Activated T-helper 2 cell treated with anti-CD3 and anti-CD28 coated beads, Interferon-gamma antibody, Interleukin-2, Interleukin-4, amounts not matched to agents 10 μg/mL and 5 μg/mL and 100 μg/mL, durations not matched to agents 14 hours and 24 hours and 36 hours (primary cell): ENCODE measurements at regions of chr1 and their contacts with region 1.

Region 1: DNA sequence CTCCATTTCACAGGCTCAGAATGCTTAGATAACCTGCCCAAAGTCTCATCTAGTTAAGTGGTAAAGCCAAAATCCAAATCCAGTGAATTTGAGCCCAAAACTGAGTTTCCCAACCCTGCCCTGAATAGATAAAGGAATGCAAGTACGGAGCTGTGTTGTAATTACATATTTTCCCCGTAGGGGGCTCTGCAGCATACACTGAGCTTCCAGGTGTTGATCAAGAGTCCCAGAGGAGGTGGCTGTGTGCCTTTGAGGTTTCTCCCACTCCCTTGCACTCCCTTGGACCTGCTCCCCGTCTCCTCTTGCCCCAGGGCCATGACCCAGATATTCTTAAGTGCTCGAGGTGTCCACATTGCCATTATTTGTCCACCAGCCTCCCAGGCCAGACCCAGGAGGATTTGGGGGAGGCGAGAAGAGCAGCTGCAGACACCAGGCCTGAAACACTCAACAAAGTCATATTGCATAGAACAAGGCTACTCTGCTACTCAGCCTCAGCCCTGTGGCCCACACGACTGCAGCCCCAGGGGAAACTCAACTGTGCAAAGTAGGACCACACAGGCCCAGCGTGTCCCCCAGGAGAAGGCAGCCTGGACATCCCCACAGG is 18.4 kb upstream of the LY9 start:
- DNase-seq: peak; percentile 38
- H3K4me3 Mint-ChIP-seq: no peak overlapping the region
- H3K27ac Mint-ChIP-seq: no peak overlapping the region
- H3K4me1 Mint-ChIP-seq: peaks cover 48% of the 10 kb centered on the region
- H3K27me3 Mint-ChIP-seq: no peaks in the 10 kb centered on the region

Region 2: DNA sequence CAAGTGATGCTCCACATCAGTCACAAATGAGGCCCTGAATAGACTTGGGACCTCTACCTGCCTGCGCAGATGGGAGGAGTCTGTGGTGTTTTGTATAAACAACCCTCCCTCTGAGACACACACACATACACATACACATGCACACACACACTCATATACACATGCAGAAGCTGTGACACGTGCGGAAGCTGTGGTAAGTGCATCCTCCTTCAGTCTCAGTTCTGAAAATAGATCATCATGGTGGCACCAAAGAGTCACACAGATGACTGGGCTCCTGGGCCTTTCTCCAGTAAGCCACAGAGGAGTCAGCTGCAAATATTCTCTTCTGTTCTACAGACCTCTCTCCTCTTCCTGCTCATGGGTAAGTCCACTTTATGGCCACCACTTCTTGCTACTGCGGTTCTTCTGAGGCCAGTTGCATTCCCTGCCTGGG is 18.4 kb after region 1 on chr1 and contains the start of gene LY9:
- intact Hi-C with region 1: loop called (anchors 1 kb)
- DNase-seq: peak; percentile 79
- H3K4me3 Mint-ChIP-seq: peak within 1 kb of the TSS; percentile 75
- H3K27ac Mint-ChIP-seq: peak within 1 kb of the TSS; percentile 80
- H3K4me1 Mint-ChIP-seq: peaks cover 62% of the 10 kb centered on the region
- H3K27me3 Mint-ChIP-seq: no peaks in the 10 kb centered on the region
- total RNA-seq, gene LY9: 0.28 and 0.34 TPM in 2 replicates

Region 3: DNA sequence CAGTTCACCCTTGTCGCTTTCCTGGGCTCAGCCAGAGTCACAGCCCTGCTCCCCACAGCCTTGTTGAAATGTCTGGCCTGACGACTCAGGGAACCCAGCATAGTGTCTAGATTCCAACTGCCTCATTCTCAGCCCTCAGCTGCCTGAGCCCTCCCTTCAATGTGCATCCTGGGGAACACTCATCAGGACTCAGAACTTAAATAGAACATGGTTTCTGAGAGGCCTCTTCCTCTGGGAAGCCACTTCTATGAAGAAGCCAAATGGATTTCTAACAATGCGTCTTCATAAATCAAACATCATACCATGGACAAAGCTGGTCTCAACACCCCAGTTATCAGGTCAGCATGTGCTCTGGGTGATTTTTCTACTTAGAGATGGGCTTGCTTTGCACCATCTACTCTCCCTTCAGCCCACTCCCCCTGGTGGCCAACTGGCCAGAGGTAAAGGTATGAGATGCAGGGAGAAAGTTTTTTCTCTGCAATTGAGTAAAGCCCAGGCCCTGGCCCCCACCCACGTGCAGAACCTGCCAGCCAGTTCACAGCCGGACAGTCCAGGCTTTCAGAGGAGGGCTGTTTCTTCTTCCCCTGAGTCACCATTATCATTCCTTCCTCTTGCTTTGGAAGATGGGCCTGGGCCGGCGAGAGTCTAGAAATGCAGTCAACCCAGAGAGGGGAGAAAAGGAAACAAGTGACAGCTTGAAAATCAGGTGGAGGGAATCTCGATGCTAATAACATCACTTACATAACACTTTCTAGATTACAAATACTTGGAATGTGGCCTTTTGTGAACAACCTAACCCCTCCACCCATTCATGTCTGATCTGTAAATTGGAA is 52.9 kb after region 1 on chr1:
- intact Hi-C with region 1: loop called (anchors 1 kb)
- DNase-seq: peak; percentile 59
- H3K4me3 Mint-ChIP-seq: no peak overlapping the region
- H3K27ac Mint-ChIP-seq: no peak overlapping the region
- H3K4me1 Mint-ChIP-seq: peaks cover 13% of the 10 kb centered on the region
- H3K27me3 Mint-ChIP-seq: no peaks in the 10 kb centered on the region

Region 4: DNA sequence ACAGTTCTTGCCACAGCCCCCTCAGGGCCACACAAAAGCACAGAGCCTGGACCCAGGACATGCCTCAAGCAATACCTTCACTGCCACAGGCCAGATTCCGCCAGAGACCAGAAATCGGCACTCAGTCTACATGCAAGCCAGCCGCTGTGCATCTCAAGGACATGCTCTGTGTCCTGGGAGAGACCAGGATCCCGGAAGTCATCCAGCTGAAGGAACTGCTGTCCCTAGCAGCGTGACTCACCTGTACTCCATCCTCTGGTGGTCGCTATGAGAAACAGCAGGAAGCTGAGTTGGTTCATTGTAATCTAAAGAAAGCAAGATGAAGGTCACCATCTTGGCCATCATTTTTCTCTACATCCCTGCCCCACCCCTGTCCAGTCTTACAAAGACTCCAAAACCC is 107.0 kb after region 1 on chr1:
- intact Hi-C with region 1: loop called (anchors 5 kb)
- DNase-seq: peak; percentile 22
- H3K4me3 Mint-ChIP-seq: no peak overlapping the region
- H3K27ac Mint-ChIP-seq: no peak overlapping the region
- H3K4me1 Mint-ChIP-seq: peaks cover 4% of the 10 kb centered on the region
- H3K27me3 Mint-ChIP-seq: peaks cover 13% of the 10 kb centered on the region

Region 5: DNA sequence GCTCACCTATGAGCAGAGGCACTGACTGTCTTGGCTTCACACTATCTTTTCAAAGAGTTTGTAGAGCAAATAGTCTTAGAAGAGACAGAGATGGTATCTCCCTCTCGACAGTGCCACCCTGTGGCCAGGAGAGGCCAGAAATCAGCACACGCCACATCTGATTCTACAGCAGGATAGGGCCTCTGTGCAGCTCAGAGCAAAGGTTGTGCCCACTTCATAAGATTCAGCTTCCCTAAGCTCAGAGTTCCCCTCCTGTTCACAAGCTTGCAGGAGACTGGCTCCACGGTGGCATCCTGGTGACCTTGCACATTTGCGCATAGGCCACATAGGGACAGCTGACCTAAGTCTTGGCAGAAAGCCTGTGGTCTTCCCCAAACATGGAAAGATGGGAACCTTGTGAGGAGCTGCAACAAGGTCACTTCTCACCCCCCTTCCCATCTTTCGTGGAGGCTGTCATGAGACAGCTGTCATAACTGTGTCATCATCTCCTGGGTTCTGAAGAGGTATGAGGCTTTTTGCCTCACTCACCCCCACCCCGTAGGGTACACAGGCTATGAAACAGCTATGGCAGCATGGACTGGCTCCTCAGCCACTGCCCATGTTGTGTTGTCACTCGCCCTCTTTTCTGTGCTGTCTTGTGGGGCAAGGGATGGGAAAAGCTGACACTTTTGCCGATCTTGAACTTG is 174.0 kb after region 1 on chr1:
- intact Hi-C with region 1: loop called (anchors 5 kb)
- DNase-seq: peak; percentile 59
- H3K4me3 Mint-ChIP-seq: no peak overlapping the region
- H3K27ac Mint-ChIP-seq: no peak overlapping the region
- H3K4me1 Mint-ChIP-seq: peaks cover 7% of the 10 kb centered on the region
- H3K27me3 Mint-ChIP-seq: no peaks in the 10 kb centered on the region